ENCODE measurements at regions of chr14 and their contacts with region 1.

Region 1: DNA sequence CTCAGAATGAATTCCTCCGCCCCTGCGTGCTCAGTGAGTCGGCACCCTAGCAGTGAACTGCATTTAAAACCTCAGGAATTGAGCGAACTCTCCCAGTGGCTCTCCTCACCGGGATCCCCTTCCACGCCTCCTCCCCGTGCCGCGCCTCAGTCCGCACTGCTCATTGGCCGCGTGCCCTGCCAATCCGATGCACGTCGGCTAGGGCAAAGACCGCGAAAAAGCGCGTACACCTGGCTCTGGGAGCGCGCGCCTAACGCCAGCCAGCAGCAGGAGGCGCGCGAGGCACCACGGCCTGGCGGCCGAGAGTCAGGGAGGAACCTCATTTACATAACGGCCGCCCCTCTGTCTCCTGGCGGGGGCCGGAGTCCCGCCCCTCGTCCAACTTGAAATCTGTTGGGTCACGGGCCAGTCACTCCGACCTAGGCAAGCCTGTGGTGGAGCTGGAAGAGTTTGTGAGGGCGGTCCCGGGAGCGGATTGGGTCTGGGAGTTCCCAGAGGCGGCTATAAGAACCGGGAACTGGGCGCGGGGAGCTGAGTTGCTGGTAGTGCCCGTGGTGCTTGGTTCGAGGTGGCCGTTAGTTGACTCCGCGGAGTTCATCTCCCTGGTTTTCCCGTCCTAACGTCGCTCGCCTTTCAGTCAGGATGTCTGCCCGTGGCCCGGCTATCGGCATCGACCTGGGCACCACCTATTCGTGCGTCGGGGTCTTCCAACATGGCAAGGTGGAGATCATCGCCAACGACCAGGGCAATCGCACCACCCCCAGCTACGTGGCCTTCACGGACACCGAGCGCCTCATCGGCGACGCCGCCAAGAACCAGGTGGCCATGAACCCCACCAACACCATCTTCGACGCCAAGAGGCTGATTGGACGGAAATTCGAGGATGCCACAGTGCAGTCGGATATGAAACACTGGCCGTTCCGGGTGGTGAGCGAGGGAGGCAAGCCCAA is at the start of gene HSPA2:
- DNase-seq: peak; percentile 99
- H3K27ac ChIP-seq: peak within 1 kb of the TSS; percentile 98
- CTCF ChIP-seq: peak; percentile 91

Region 2: DNA sequence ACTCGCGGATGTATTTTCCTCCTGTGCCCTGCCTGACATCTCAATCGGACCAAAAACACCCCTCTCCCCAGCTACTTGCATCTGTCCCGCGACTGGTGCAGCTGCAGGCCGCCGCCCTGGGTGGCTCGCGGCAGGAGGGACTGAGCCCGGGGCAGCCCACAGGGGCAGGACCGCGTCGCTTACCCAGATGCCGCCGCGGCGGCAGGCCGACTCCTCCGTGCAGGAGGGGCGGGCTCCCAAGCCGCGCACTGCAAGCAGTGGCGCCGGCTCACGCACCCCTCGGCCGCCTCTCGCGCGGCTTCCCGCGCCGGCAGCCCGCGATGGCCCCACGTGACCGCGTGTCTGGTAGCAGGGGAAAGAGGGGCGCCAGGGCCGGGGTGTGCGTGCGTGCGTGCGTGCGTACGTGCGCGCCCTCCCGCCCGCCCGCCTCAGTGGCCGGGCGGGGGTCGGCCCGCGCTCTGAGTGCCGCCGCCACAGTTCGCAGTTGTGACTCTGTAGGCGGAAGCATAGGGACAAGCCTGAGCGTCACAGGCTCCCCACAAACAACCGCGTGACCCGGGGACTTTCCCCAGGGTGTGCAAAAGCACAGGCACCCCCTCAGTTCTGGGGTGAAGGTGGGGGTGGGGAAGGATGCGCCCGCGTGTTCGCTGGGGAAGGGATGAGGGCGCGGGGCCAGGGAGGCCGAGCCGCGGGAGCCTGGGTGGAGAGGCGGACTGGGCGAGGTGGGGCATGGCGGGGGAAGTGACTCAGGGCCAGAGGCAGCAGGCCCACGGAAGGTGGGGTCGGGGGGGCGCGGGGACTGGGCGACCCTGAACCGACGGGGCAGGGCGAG is 36.8 kb before region 1 on chr14 and contains the start of gene ZBTB25:
- CTCF ChIA-PET with region 1: no interaction called
- POLR2A ChIA-PET with region 1: interaction called, 10 read pairs
- DNase-seq: peak; percentile 79
- H3K27ac ChIP-seq: peak within 1 kb of the TSS; percentile 99
- CTCF ChIP-seq: no peak

Region 3: DNA sequence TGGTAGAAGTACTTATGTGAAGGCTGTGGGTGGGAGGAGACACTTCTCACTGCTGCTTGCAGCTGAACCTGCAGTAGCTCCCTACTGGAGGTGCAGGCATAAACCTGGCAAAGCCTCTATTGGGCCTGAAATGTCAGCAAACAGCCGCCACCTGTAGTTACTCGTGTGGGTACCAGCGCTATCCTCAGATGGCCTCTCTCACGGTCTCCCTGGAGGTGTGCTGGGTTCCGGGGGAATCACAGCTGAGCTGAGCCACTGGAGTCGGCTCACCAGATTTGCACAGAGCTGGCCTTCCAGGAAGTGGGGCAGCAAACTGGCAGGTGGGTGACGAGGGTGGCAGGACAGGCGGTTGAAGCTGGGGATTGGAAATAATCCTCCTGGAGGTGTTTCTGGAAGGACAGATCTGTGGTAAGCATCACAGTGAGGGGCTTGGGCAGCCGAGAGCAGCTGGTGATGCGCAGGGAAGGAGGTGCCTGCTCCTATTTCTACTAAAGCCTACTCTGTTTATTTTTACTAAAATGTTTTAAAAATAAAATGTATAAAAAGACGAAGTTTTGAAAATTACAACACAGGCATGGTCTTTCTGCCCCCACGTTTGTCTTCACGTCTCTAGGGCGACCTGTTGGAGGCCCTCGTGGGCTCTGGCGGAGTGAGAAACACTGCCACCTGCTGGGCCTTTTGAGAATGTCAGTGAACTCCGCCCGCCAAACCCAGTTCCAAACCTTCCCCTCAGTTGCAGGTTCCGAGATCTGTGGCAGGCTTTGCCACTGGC is 95.9 kb after region 1 on chr14:
- CTCF ChIA-PET with region 1: interaction called, 11 read pairs
- POLR2A ChIA-PET with region 1: interaction called, 10 read pairs
- DNase-seq: peak; percentile 72
- H3K27ac ChIP-seq: peak overlapping the region; percentile 22; the same call in 1 of the 2 replicates
- CTCF ChIP-seq: peak; percentile 89

Region 4: GRCh38 chr14:64745511-64746091 is 205.1 kb after region 1 on chr14:
- CTCF ChIA-PET with region 1: interaction called, 10 read pairs
- POLR2A ChIA-PET with region 1: no interaction called
- DNase-seq: no peak
- H3K27ac ChIP-seq: peak overlapping the region; percentile 67
- CTCF ChIP-seq: no peak